SK-N-SH (cell line): ENCODE measurements at regions of chr1 and their contacts with region 1.

Region 1: DNA sequence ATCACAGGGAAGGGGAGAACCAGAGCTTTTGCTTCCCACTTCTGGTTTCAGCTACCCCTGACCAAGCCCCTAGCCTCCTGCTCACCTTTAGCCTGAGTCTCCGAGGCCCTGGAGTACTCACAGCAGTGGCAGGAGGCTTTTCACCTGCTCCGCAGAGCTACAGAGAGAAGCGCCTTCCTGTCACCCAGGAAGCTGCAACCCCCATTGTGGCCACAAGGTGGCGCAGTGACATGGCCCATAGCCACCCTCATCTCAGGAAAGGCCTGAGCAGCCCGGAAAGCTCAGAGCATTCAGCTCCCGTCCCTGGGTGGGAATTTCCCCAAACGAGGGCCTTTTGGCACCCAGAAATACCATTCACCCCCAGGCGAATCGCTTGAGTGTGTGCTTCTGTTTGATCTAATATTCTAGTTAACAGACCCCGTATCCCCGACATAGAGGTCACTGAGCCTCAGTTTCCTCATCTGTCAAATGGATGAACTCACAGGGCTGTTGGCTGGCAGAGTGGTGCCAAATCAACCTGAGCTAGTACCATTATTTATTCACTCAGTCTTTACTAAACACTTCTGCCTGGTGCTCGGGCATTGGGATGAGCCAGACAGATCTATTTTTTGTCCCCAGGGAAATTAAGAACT is 25.3 kb downstream of the A3GALT2 start:
- DNase-seq: peak; percentile 89
- H3K4me3 ChIP-seq: no peak overlapping the region
- H3K27ac ChIP-seq: no peak overlapping the region; a peak in 1 of 4 replicates
- H3K4me1 ChIP-seq: no peaks in the 10 kb centered on the region
- H3K27me3 ChIP-seq: no peaks in the 10 kb centered on the region
- CTCF ChIP-seq: peak; percentile 93
- EP300 ChIP-seq: no peak
- RAD21 ChIP-seq: peak; percentile 81

Region 2: DNA sequence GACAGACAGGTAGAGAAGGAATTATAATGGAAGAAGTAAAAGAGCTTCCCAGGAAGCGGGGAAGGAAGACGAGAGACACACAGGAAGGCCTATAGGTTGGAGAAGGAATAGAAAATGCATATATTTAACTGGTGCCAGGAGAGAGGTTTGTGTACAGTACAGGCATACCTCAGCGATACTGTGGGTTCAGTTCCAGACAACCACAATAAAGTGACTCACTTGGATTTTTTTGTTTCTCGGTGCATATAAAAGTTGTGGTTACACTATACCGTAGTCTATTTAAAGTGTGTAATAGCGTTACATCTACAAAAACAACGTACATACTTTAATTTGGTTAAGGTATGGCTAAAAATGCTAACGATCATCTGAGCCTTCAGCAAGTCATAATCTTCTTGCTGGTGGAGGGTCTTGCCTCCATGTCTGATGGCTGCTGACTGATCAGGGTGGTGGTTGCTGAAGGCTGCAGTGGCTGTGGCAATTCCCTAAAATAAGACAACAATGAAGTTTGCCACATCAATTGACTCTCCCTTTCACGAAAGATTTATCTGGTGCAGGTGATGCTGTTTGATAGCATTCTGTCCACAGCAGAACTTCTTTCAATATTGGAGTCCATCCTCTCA is 494.4 kb before region 1 on chr1:
- CTCF ChIA-PET with region 1: no interaction called
- POLR2A ChIA-PET with region 1: no interaction called
- DNase-seq: no peak
- H3K4me3 ChIP-seq: no peak overlapping the region
- H3K27ac ChIP-seq: no peak overlapping the region
- H3K4me1 ChIP-seq: peaks cover 0 to 1% of the 10 kb centered on the region in 2 experiments; a peak in 1 of 4 replicates
- H3K27me3 ChIP-seq: no peaks in the 10 kb centered on the region
- CTCF ChIP-seq: no peak
- EP300 ChIP-seq: no peak
- RAD21 ChIP-seq: no peak

Region 3: GRCh38 chr1:33072707-33073106 is 222.9 kb before region 1 on chr1:
- CTCF ChIA-PET with region 1: no interaction called
- POLR2A ChIA-PET with region 1: no interaction called
- DNase-seq: no peak
- H3K4me3 ChIP-seq: no peak overlapping the region
- H3K27ac ChIP-seq: no peak overlapping the region
- H3K4me1 ChIP-seq: no peaks in the 10 kb centered on the region
- H3K27me3 ChIP-seq: no peaks in the 10 kb centered on the region; the same call in 1 of the 2 replicates
- CTCF ChIP-seq: no peak
- EP300 ChIP-seq: no peak
- RAD21 ChIP-seq: no peak

Region 4: GRCh38 chr1:33273406-33273805 is 22.2 kb before region 1 on chr1:
- CTCF ChIA-PET with region 1: interaction called, 13 read pairs
- POLR2A ChIA-PET with region 1: no interaction called
- DNase-seq: no peak
- H3K4me3 ChIP-seq: no peak overlapping the region
- H3K27ac ChIP-seq: no peak overlapping the region
- H3K4me1 ChIP-seq: no peaks in the 10 kb centered on the region; a peak in 1 of 4 replicates
- H3K27me3 ChIP-seq: no peaks in the 10 kb centered on the region
- CTCF ChIP-seq: no peak
- EP300 ChIP-seq: no peak
- RAD21 ChIP-seq: no peak

Region 5: GRCh38 chr1:33305816-33306647 is 10.5 kb after region 1 on chr1:
- CTCF ChIA-PET with region 1: interaction called, 10 read pairs
- POLR2A ChIA-PET with region 1: no interaction called
- DNase-seq: no peak
- H3K4me3 ChIP-seq: no peak overlapping the region
- H3K27ac ChIP-seq: no peak overlapping the region
- H3K4me1 ChIP-seq: no peaks in the 10 kb centered on the region; a peak in 1 of 4 replicates
- H3K27me3 ChIP-seq: no peaks in the 10 kb centered on the region
- CTCF ChIP-seq: no peak
- EP300 ChIP-seq: no peak
- RAD21 ChIP-seq: no peak

Region 6: GRCh38 chr1:33338440-33339211 is 43.1 kb after region 1 on chr1:
- CTCF ChIA-PET with region 1: interaction called, 24 read pairs
- POLR2A ChIA-PET with region 1: no interaction called
- DNase-seq: no peak
- H3K4me3 ChIP-seq: no peak overlapping the region; a peak in 1 of 4 replicates
- H3K27ac ChIP-seq: peak overlapping the region; percentile 44 to 60
- H3K4me1 ChIP-seq: peaks cover 51 to 79% of the 10 kb centered on the region in 2 experiments
- H3K27me3 ChIP-seq: no peaks in the 10 kb centered on the region
- CTCF ChIP-seq: no peak
- EP300 ChIP-seq: no peak
- RAD21 ChIP-seq: no peak

Region 7: DNA sequence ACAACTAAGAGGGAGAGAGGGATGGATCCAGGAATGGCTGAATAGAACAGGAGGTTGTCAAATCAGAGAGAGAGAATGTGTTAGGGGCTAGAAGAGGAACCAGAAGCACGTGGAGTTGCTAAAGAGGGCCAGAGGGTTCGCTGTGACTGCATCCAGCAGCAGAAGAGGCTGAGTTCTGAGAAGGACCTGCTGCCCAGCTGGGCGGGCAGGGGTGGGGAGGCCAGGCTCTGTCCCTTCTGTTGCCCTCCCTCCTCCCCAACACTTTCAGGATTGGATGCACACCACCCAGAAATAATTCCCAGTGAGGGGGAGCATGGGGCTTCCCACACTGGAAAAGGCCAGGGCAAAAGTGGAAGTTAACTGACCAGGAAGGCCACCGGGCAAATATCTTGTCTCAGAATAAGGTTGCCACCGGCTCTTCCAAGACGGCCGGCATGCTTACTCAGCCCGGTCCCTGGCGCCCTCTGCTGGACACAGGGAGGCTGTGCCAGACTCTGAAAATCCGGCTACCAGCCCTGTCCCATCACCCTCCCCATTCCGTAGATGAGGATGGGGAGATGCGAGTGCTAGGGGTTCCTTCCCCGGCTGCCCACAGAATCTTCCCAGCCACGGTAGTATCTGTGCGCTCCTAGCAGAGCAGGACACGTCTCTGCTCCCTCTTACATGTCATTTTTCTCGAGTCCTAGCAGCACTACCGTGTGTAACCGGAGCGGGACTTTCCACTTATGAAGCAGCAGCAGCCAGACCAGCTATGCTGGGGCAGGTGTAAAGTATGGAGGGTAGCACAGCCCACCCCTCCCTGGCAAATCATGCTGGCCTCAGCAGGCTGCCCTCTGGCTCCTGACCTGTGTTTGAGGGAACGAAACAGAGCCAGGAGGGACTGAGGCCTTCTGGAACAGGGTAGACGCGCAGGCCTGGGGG is 72.2 kb after region 1 on chr1:
- CTCF ChIA-PET with region 1: interaction called, 167 read pairs
- POLR2A ChIA-PET with region 1: no interaction called
- DNase-seq: peak; percentile 93
- H3K4me3 ChIP-seq: no peak overlapping the region
- H3K27ac ChIP-seq: peak overlapping the region in 1 of 2 experiments; percentile 25; a peak in 1 of 4 replicates
- H3K4me1 ChIP-seq: peaks cover 0 to 57% of the 10 kb centered on the region in 2 experiments
- H3K27me3 ChIP-seq: no peaks in the 10 kb centered on the region
- CTCF ChIP-seq: peak; percentile 94
- EP300 ChIP-seq: no peak
- RAD21 ChIP-seq: peak; percentile 96

Region 8: GRCh38 chr1:33455539-33456501 is 160.3 kb after region 1 on chr1:
- CTCF ChIA-PET with region 1: interaction called, 40 read pairs
- POLR2A ChIA-PET with region 1: no interaction called
- DNase-seq: peak; percentile 66
- H3K4me3 ChIP-seq: no peak overlapping the region; a peak in 1 of 4 replicates
- H3K27ac ChIP-seq: peak overlapping the region in 1 of 2 experiments; percentile 18; a peak in 1 of 4 replicates
- H3K4me1 ChIP-seq: peaks cover 0 to 6% of the 10 kb centered on the region in 2 experiments; a peak in 2 of 4 replicates
- H3K27me3 ChIP-seq: no peaks in the 10 kb centered on the region
- CTCF ChIP-seq: peak; percentile 81
- EP300 ChIP-seq: no peak
- RAD21 ChIP-seq: peak; percentile 87

Region 9: GRCh38 chr1:33616773-33617172 is 321.2 kb after region 1 on chr1:
- CTCF ChIA-PET with region 1: interaction called, 18 read pairs
- POLR2A ChIA-PET with region 1: no interaction called
- DNase-seq: no peak
- H3K4me3 ChIP-seq: no peak overlapping the region
- H3K27ac ChIP-seq: no peak overlapping the region
- H3K4me1 ChIP-seq: peaks cover 0 to 10% of the 10 kb centered on the region in 2 experiments; a peak in 1 of 4 replicates
- H3K27me3 ChIP-seq: no peaks in the 10 kb centered on the region; the same call in 1 of the 2 replicates
- CTCF ChIP-seq: no peak
- EP300 ChIP-seq: no peak
- RAD21 ChIP-seq: no peak